ENCODE measurements at regions of chr16 and their contacts with region 1.

Region 1: GRCh38 chr16:89155184-89155679 is 16.3 kb upstream of the CDH15 start:
- DNase-seq: no peak
- H3K4me3 ChIP-seq: no peak overlapping the region
- H3K27ac ChIP-seq: no peak overlapping the region
- H3K4me1 ChIP-seq: peaks cover 5% of the 10 kb centered on the region
- H3K27me3 ChIP-seq: no peaks in the 10 kb centered on the region
- CTCF ChIP-seq: no peak

Region 2: GRCh38 chr16:88415713-88416323 is 739.4 kb before region 1 on chr16:
- CTCF ChIA-PET with region 1: no interaction called
- dilution Hi-C with region 1: no loop called
- in situ Hi-C with region 1: no loop called
- intact Hi-C with region 1: no loop called
- DNase-seq: no peak
- H3K4me3 ChIP-seq: no peak overlapping the region
- H3K27ac ChIP-seq: no peak overlapping the region
- H3K4me1 ChIP-seq: no peaks in the 10 kb centered on the region
- H3K27me3 ChIP-seq: no peaks in the 10 kb centered on the region
- CTCF ChIP-seq: no peak

Region 3: GRCh38 chr16:89084411-89084810 is 70.8 kb before region 1 on chr16:
- CTCF ChIA-PET with region 1: no interaction called
- dilution Hi-C with region 1: no loop called
- in situ Hi-C with region 1: no loop called
- intact Hi-C with region 1: no loop called
- DNase-seq: no peak
- H3K4me3 ChIP-seq: no peak overlapping the region
- H3K27ac ChIP-seq: no peak overlapping the region
- H3K4me1 ChIP-seq: no peaks in the 10 kb centered on the region
- H3K27me3 ChIP-seq: peaks cover 4% of the 10 kb centered on the region
- CTCF ChIP-seq: no peak

Region 4: DNA sequence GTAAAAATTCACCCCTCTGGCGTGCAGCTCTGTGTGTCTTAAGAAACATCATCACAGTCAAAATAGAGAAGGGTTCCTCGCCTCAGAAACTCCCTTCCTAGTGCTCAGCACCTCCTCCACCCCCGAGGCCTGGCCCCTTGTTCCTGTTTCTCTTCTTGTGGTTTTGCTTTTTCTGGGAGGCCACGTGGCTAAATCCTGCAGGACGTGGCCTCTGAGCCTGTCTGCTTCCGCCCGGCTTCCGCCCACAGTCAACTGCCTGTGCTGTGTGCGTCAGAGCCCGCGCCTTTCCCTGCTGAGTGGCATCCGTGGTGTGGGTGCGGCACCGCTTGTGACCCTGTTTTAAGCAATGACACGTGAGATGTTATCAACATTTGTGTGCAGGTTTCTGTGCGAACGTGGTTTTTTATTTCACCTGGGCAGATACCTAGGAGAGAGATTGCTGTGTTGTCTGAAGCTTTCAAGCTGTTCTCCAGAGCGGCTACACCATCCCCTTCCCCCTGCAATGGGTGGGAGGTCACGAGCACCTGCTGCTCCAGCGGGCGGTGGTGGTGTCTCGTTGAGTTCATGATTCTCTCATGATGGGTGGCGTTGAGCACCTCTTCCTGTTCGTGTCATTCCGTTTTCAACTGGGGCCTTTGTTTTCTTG is 39.9 kb before region 1 on chr16:
- CTCF ChIA-PET with region 1: no interaction called
- dilution Hi-C with region 1: loop called (anchors 5 kb)
- in situ Hi-C with region 1: no loop called
- intact Hi-C with region 1: no loop called
- DNase-seq: peak; percentile 61
- H3K4me3 ChIP-seq: no peak overlapping the region
- H3K27ac ChIP-seq: no peak overlapping the region
- H3K4me1 ChIP-seq: peaks cover 17% of the 10 kb centered on the region
- H3K27me3 ChIP-seq: no peaks in the 10 kb centered on the region
- CTCF ChIP-seq: no peak

Region 5: GRCh38 chr16:89241187-89242007 is 86.2 kb after region 1 on chr16:
- CTCF ChIA-PET with region 1: no interaction called
- dilution Hi-C with region 1: no loop called
- in situ Hi-C with region 1: no loop called
- intact Hi-C with region 1: no loop called
- DNase-seq: peak; percentile 70
- H3K4me3 ChIP-seq: peak overlapping the region; percentile 51 to 79 (median 77)
- H3K27ac ChIP-seq: peak overlapping the region; percentile 66
- H3K4me1 ChIP-seq: no peaks in the 10 kb centered on the region
- H3K27me3 ChIP-seq: no peaks in the 10 kb centered on the region
- CTCF ChIP-seq: no peak